ENCODE measurements at regions of chr17 and their contacts with region 1.

Region 1: DNA sequence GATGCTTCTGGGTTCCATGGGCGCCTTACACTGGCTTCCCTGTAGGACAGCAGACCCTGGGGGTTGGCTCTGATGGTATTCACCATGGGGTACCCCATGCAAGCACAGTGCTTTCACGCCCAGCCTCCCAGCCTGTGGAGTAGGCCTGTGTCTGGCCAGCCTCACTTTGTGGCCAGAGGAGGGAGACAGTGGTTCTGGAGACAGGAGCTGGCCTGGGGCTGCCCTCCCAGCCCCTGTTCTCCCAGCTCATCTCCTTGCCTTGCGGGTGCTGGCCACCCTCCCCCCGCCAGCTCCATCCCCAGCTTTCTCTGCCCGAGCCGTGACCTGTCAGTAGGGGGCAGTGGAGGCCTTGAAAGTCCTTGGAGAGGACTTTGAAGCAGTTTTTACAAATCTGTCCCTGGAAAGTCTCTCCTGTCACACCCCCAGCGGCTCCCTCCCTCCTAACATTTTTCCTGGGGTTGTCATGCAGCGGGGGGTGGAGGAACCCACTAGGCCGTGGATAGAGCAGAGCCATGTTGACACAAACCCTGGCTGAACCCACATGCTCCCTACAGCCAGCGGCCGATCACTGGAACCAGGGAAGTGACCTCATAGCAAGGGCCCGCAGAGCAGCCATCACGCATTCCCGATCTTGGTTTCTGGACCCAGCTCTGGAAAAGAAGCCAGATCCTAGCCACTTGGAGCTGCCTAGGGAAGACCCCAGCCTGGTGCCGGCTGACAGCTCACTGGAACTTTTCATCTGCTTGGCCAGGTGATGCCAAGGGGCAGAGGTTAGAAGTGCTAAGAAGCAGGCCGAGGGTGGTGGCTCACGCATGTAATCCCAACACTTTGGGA is 289.4 kb downstream of the SEC14L1 start:
- DNase-seq: peak; percentile 92 to 97
- ATAC-seq: peak; percentile 78 to 88 (median 85)
- H3K4me3 ChIP-seq: peak overlapping the region in 1 of 10 donors; percentile 2
- H3K27ac ChIP-seq: peak overlapping the region in 9 of 10 donors; percentile 65 to 90 (median 84)
- H3K4me1 ChIP-seq: peaks cover 60 to 98% (median 92%) of the 10 kb centered on the region in 9 donors
- H3K27me3 ChIP-seq: no peaks in the 10 kb centered on the region
- CTCF ChIP-seq: peak; percentile 73 to 94 (median 86)

Region 2: GRCh38 chr17:77319211-77320043 is 110.7 kb before region 1 on chr17:
- intact Hi-C with region 1: loop called in 2 of 10 experiments (anchors 10 kb)
- DNase-seq: peak; percentile 76 to 87
- ATAC-seq: peak; percentile 40 to 71 (median 62)
- H3K4me3 ChIP-seq: peak overlapping the region; percentile 12 to 57 (median 50)
- H3K27ac ChIP-seq: peak overlapping the region in 9 of 10 donors; percentile 63 to 94 (median 81)
- H3K4me1 ChIP-seq: peaks cover 12 to 79% (median 57%) of the 10 kb centered on the region in 9 donors
- H3K27me3 ChIP-seq: no peaks in the 10 kb centered on the region
- CTCF ChIP-seq: no peak

Region 3: DNA sequence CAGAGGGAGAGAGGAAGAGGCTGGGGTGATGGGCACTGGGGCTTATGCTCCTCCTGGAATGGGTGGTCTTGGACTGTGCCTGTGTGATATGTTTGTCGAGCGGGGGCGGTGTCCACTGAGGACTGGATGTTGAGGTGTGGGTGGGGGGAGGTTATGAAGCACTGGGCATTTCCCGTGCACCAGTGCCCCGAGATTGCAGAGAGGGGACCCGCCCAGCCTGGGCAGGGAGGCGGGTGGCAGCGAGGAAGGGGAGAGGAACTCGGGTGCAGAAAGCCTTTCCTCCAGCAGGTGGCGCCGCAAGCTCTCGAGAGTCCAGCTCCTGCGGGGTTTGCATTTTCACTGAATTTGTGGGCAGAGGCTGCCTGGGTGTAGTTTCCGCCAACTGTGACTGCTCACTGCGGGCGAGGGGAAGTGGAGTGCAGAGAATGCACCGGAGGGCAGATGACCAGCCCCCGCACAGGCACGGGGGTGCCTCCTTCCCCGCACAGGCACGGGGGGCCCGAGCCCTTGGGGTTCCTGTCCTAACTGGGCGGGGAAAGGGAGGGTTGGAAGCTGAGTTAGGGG is 98.8 kb before region 1 on chr17:
- intact Hi-C with region 1: loop called in 8 of 10 experiments (anchors 2 to 10 kb)
- DNase-seq: peak; percentile 94 to 95
- ATAC-seq: peak; percentile 86 to 94 (median 91)
- H3K4me3 ChIP-seq: peak overlapping the region in 6 of 10 donors; percentile 26 to 46 (median 34)
- H3K27ac ChIP-seq: peak overlapping the region in 7 of 10 donors; percentile 15 to 80 (median 62)
- H3K4me1 ChIP-seq: peaks cover 0 to 40% (median 12%) of the 10 kb centered on the region in 9 donors
- H3K27me3 ChIP-seq: no peaks in the 10 kb centered on the region
- CTCF ChIP-seq: peak; percentile 92 to 98 (median 96)

Region 4: GRCh38 chr17:77372444-77373298 is 57.5 kb before region 1 on chr17:
- intact Hi-C with region 1: loop called in 3 of 10 experiments (anchors 5 to 10 kb)
- DNase-seq: peak; percentile 88 to 92
- ATAC-seq: peak; percentile 56 to 75 (median 66)
- H3K4me3 ChIP-seq: peak overlapping the region; percentile 81 to 100 (median 92)
- H3K27ac ChIP-seq: peak overlapping the region; percentile 89 to 99 (median 97)
- H3K4me1 ChIP-seq: peaks cover 46 to 76% (median 72%) of the 10 kb centered on the region in 9 donors
- H3K27me3 ChIP-seq: no peaks in the 10 kb centered on the region
- CTCF ChIP-seq: peak in 2 of 9 donors; percentile 18 to 21

Region 5: DNA sequence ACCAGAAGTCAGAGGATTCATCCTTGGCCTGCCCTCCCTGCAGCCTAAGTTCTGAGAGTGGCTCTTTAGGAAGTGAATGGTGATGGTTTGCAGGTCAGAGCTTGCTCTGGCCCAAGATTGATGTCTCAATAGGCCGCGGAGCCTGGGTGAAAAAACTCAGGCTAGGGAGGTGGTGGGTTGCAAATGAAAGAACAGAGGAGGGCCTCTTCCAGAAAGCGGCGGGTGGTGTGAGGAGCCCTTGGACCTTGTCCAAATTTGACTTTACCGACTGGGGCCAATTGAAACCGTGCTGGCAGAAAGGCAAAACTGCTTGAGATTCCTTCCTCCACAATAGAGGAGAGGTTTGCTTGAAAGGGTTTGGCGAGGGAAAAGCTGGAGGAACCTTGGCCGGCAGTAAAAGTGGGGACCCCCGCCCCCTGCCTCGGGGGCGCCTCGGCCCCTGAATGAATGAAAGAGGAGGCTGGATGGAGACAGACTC is 41.9 kb after region 1 on chr17:
- intact Hi-C with region 1: loop called in 5 of 10 experiments (anchors 1 to 5 kb)
- DNase-seq: peak; percentile 27 to 63
- ATAC-seq: peak; percentile 37 to 66 (median 52)
- H3K4me3 ChIP-seq: peak overlapping the region in 3 of 10 donors; percentile 1 to 16 (median 15)
- H3K27ac ChIP-seq: peak overlapping the region; percentile 17 to 88 (median 80)
- H3K4me1 ChIP-seq: peaks cover 34 to 96% (median 92%) of the 10 kb centered on the region in 9 donors
- H3K27me3 ChIP-seq: no peaks in the 10 kb centered on the region
- CTCF ChIP-seq: no peak

Region 6: DNA sequence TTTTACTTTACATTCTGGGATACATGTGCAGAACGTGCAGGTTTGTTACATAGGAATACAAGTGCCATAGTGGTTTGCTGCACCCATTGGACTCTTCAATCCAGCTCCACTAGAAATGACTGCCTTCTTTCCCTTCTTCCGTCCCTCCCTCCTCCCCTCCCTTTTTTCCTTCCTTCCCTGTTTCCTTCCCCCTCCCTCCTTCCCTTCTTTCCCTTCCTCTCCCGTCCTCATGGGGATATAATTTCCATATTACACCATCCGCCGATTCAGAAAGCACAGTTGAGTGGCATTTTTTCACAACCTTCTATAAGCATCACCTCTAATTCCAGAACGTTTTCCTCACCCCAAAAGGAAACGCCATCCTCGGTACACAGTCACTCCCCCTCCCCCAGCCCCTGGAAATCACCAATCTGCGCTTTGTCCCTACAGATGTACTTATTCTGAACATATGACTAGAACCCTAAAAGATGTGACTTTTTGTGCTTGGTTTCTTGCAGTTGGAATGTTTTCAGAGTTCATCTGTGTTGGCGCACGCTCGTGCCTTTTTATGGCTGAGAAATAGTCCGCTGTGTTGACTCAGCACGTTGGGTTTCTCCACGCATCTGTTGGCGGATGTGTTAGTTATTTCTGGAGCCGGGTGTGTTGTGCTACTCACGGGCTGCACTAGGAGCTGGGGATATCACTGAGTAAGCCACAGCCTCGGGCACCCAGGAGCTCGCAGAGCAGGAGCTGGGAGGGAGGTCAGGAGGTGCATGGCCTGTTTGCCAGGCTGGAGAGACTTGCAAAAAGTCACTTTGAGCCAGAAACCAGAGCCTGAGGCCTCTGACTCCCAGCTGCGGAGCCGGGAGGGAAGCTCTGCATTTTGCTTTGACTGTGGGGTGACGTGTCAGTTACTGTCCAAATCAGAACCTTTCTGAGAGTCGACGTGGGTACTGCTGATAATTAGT is 47.1 kb after region 1 on chr17:
- intact Hi-C with region 1: loop called in 5 of 10 experiments (anchors 1 to 5 kb)
- DNase-seq: peak; percentile 52 to 74
- ATAC-seq: peak; percentile 66 to 87 (median 78)
- H3K4me3 ChIP-seq: no peak overlapping the region
- H3K27ac ChIP-seq: peak overlapping the region in 9 of 10 donors; percentile 5 to 74 (median 61)
- H3K4me1 ChIP-seq: peaks cover 20 to 88% (median 79%) of the 10 kb centered on the region in 9 donors
- H3K27me3 ChIP-seq: no peaks in the 10 kb centered on the region
- CTCF ChIP-seq: peak in 1 of 9 donors; percentile 8

Region 7: GRCh38 chr17:77494664-77495435 is 64.7 kb after region 1 on chr17:
- intact Hi-C with region 1: loop called in 9 of 10 experiments (anchors 1 to 5 kb)
- DNase-seq: peak; percentile 74 to 82
- ATAC-seq: peak; percentile 55 to 82 (median 72)
- H3K4me3 ChIP-seq: no peak overlapping the region
- H3K27ac ChIP-seq: peak overlapping the region in 1 of 10 donors; percentile 40
- H3K4me1 ChIP-seq: peaks cover 9 to 28% (median 18%) of the 10 kb centered on the region in 9 donors
- H3K27me3 ChIP-seq: no peaks in the 10 kb centered on the region
- CTCF ChIP-seq: peak; percentile 95 to 100 (median 98)

Region 8: DNA sequence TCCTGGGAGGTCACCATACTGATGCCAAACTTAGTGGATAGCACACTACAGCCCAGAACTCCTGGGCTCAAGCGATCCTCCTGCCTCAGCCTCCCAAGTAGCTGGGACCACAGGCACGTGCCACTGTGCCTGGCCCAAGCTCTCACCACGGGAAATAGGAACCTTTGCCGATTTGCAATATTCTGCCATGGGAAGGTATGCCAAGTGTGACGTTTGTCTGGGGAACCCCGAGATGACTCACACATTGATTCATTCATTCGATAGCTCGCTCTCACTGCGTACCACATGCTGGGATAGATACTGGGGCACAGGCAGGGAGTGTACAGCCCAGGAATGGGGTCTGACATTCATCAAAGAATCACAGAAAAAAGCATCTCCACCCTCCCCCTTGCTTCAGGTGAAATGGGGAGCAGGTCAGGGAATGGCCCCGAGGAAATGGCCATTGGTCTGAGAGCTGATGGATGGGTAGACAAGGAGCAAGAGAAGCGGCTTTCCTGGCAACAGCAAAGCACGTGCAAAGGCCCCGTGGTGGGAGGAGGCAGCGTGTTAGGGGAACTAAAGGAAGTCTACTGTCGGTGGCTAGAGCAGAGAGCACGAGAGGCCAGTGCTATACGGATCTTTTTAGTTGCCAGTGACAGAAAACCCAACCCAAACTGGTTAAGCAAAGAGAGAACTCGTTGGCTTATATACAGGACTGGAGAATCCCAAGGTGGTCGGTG is 1102.9 kb after region 1 on chr17:
- intact Hi-C with region 1: no loop called
- DNase-seq: no peak
- ATAC-seq: no peak
- H3K4me3 ChIP-seq: no peak overlapping the region
- H3K27ac ChIP-seq: no peak overlapping the region
- H3K4me1 ChIP-seq: peaks cover 0 to 16% (median 7%) of the 10 kb centered on the region in 9 donors
- H3K27me3 ChIP-seq: no peaks in the 10 kb centered on the region
- CTCF ChIP-seq: no peak

Measured in heart right ventricle (tissue), 16 donors.